Activated T-helper 1 cell treated with anti-CD3 and anti-CD28 coated beads, Interleukin-12 subunit alpha, Interleukin-12 subunit beta, Interleukin-2, Interleukin-4 antibody, amounts not matched to agents 30 ng/mL and 10 ng/mL and 1 ng/mL, durations not matched to agents 14 hours and 24 hours and 36 hours (primary cell): ENCODE measurements at regions of chr19 and their contacts with region 1.

Region 1: GRCh38 chr19:2610637-2611482 is 91.6 kb downstream of the GNG7 start:
- DNase-seq: peak; percentile 79
- H3K4me3 Mint-ChIP-seq: peak overlapping the region; percentile 85
- H3K27ac Mint-ChIP-seq: peak overlapping the region; percentile 75
- H3K4me1 Mint-ChIP-seq: peaks cover 39% of the 10 kb centered on the region
- H3K27me3 Mint-ChIP-seq: peaks cover 12% of the 10 kb centered on the region

Region 2: GRCh38 chr19:2578901-2579677 is 31.8 kb before region 1 on chr19:
- intact Hi-C with region 1: loop called (anchors 2 kb)
- DNase-seq: peak; percentile 53
- H3K4me3 Mint-ChIP-seq: peak overlapping the region; percentile 33
- H3K27ac Mint-ChIP-seq: no peak overlapping the region
- H3K4me1 Mint-ChIP-seq: peaks cover 6% of the 10 kb centered on the region
- H3K27me3 Mint-ChIP-seq: peaks cover 5% of the 10 kb centered on the region

Region 3: DNA sequence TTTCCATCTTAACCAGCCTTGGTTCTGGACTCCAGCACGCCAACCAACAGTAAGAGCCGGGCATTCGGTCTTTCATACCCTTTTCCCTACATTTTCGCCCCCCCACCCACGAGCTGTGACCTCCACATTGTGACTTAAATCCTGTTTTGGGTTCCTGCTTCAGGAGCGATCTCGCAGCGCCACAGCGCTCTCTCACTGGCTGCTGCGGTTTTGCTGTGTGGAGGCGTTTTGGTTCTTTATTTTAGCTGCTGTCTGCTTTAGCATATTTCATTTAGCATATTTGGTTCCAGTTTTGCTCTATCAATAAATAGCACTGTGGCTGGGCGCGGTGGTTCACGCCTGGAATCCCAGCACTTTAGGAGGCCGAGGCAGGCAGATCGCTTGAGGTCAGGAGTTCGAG is 148.5 kb after region 1 on chr19:
- intact Hi-C with region 1: no loop called
- DNase-seq: no peak
- H3K4me3 Mint-ChIP-seq: no peak overlapping the region
- H3K27ac Mint-ChIP-seq: no peak overlapping the region
- H3K4me1 Mint-ChIP-seq: no peaks in the 10 kb centered on the region
- H3K27me3 Mint-ChIP-seq: no peaks in the 10 kb centered on the region